Activated naive CD8-positive, alpha-beta T cell treated with anti-CD3 and anti-CD28 coated beads, Interleukin-2, amount 10 ng/mL, durations not matched to agents 7 days and 5 days (primary cell): ENCODE measurements at regions of chr16 and their contacts with region 1.

Region 1: DNA sequence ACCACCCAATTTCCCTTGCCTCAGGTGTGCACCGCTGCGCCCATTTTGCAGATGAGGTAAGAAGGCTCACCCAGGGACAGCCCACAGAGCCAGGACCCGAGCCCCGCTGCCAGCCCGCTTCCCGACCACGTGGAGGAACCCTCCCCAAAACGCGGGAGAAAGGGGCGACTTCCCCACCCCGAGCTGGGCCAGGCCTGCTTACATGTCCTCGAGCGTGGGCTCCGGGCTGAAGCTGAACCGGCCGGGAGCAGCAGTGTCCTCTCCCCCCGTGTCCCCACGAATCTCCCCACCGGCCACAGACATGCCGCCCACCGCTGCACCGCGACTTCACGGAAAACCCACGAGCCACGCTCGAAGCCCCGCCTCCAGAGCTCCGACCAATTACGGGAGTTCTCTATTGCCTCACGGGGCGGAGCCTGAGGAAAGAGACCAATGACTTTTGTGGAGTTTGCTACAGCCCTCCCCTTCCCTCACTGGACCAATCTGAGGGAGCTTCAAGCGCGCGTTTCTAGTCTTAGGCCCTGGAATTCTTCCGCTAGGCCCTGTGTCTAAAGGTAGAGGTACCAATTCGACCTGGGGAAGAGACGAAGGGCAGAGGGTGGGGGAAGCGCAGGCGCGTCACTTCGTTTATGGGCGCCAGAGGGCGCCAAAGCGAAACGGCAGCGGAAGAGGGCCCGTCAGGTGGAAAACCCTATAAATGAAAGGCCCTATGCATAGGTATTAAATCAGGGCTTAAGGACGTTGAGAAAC is at the start of gene DCTPP1:
- DNase-seq: peak; percentile 91
- ATAC-seq: peak; percentile 99
- H3K4me3 Mint-ChIP-seq: no peak within 1 kb of the TSS
- H3K27ac Mint-ChIP-seq: no peak within 1 kb of the TSS
- H3K4me1 Mint-ChIP-seq: peaks cover 26% of the 10 kb centered on the region
- H3K27me3 Mint-ChIP-seq: no peaks in the 10 kb centered on the region
- total RNA-seq, gene DCTPP1: 52.2 to 52.8 TPM

Region 2: DNA sequence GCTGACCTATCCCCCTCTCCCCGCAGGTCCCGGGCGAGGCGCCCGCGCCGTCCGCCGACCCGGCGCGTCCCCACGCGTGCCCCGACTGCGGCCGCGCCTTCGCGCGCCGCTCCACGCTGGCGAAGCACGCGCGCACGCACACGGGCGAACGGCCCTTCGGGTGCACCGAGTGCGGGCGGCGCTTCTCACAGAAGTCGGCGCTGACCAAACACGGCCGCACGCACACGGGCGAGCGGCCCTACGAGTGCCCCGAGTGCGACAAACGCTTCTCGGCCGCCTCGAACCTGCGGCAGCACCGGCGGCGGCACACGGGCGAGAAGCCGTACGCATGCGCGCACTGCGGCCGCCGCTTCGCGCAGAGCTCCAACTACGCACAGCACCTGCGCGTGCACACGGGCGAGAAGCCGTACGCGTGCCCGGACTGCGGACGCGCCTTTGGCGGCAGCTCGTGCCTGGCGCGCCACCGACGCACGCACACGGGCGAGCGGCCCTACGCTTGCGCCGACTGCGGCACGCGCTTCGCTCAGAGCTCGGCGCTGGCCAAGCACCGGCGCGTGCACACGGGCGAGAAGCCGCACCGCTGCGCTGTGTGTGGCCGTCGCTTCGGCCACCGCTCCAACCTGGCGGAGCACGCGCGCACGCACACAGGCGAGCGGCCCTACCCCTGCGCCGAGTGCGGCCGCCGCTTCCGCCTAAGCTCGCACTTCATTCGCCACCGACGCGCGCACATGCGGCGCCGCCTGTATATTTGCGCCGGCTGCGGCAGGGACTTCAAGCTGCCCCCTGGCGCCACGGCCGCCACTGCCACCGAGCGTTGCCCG is 12.1 kb before region 1 on chr16:
- POLR2A ChIA-PET with region 1: interaction called, 32 read pairs
- DNase-seq: peak; percentile 91
- ATAC-seq: peak; percentile 90
- H3K4me3 Mint-ChIP-seq: peak overlapping the region; percentile 42
- H3K27ac Mint-ChIP-seq: no peak overlapping the region
- H3K4me1 Mint-ChIP-seq: peaks cover 21% of the 10 kb centered on the region
- H3K27me3 Mint-ChIP-seq: no peaks in the 10 kb centered on the region

Region 3: GRCh38 chr16:30445408-30446202 is 15.8 kb after region 1 on chr16 and contains the start of gene SEPHS2:
- POLR2A ChIA-PET with region 1: interaction called, 10 read pairs
- DNase-seq: peak; percentile 95
- ATAC-seq: peak; percentile 95
- H3K4me3 Mint-ChIP-seq: peak within 1 kb of the TSS; percentile 88
- H3K27ac Mint-ChIP-seq: peak within 1 kb of the TSS; percentile 90
- H3K4me1 Mint-ChIP-seq: peaks cover 39% of the 10 kb centered on the region
- H3K27me3 Mint-ChIP-seq: no peaks in the 10 kb centered on the region
- total RNA-seq, gene SEPHS2: 59.4 to 59.8 TPM

Region 4: GRCh38 chr16:30472328-30472942 is 42.6 kb after region 1 on chr16 and contains the start of gene ITGAL:
- POLR2A ChIA-PET with region 1: interaction called, 17 read pairs
- DNase-seq: peak; percentile 72
- ATAC-seq: peak; percentile 82
- H3K4me3 Mint-ChIP-seq: peak within 1 kb of the TSS; percentile 100
- H3K27ac Mint-ChIP-seq: peak within 1 kb of the TSS; percentile 92
- H3K4me1 Mint-ChIP-seq: peaks cover 47% of the 10 kb centered on the region
- H3K27me3 Mint-ChIP-seq: no peaks in the 10 kb centered on the region
- total RNA-seq, gene ITGAL: 662 to 664 TPM

Region 5: GRCh38 chr16:30509081-30509765 is 79.4 kb after region 1 on chr16:
- POLR2A ChIA-PET with region 1: no interaction called
- DNase-seq: no peak
- ATAC-seq: no peak
- H3K4me3 Mint-ChIP-seq: no peak overlapping the region
- H3K27ac Mint-ChIP-seq: no peak overlapping the region
- H3K4me1 Mint-ChIP-seq: peaks cover 16% of the 10 kb centered on the region
- H3K27me3 Mint-ChIP-seq: no peaks in the 10 kb centered on the region

Region 6: GRCh38 chr16:30571695-30572600 is 142.1 kb after region 1 on chr16 and contains the start of gene ZNF688:
- POLR2A ChIA-PET with region 1: interaction called, 14 read pairs
- DNase-seq: peak; percentile 90
- ATAC-seq: peak; percentile 86
- H3K4me3 Mint-ChIP-seq: peak within 1 kb of the TSS; percentile 97
- H3K27ac Mint-ChIP-seq: peak within 1 kb of the TSS; percentile 90
- H3K4me1 Mint-ChIP-seq: peaks cover 36% of the 10 kb centered on the region
- H3K27me3 Mint-ChIP-seq: no peaks in the 10 kb centered on the region
- total RNA-seq, gene ZNF688: 17.8 to 18.3 TPM

Region 7: GRCh38 chr16:30609926-30610839 is 180.3 kb after region 1 on chr16 and contains the start of gene ZNF689:
- POLR2A ChIA-PET with region 1: interaction called, 13 read pairs
- DNase-seq: peak; percentile 92
- ATAC-seq: peak; percentile 89
- H3K4me3 Mint-ChIP-seq: peak within 1 kb of the TSS; percentile 96
- H3K27ac Mint-ChIP-seq: peak within 1 kb of the TSS; percentile 94
- H3K4me1 Mint-ChIP-seq: peaks cover 24% of the 10 kb centered on the region
- H3K27me3 Mint-ChIP-seq: no peaks in the 10 kb centered on the region
- total RNA-seq, gene ZNF689: 12.7 to 14.4 TPM